Heart left ventricle (tissue), 16 donors: ENCODE measurements at regions of chr11 and their contacts with region 1.

Region 1: DNA sequence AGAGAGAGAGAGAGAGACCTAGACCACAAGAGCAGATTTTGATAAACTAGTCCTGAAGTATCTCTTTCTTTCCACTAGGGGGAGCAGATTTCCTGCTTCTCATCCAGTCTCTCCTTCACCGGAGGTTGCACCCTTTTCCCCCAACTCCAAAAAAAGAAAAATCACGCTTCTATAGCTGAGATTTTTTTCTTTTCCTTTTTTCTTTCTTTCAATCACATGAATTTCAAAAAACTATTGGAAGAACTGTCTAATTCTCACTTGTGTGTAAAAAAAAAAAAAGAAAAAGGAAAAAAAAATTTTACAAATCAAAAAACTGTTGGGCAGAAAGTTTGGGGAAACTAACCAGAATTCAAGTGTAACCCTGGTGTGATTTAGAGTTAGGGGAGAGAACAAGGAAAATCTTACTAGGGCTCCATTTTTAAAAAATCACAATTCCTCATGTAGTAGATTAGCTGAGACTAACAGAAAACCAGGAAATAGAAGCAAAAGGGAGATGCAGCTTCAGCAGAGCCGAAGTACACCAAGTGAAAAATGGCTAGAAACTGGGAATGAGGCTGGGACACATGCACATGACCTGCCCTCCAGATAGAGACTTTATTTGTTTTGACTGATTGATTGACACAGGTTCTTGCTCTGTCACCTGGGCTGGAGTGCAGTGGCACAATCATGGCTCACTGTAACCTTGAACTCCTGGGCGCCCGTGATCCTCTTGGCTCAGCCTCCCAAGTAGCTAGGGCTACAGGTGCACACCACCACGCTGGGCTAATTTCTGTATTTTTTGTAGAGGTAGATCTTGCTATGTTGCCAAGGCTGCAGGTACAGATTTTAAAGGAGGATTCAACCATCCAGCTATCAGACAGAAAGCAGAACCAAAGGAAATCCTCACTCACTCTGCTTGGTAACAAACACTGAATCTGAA is 27.1 kb downstream of the SDHD start:
- DNase-seq: no peak
- ATAC-seq: peak; percentile 57 to 82 (median 62)
- H3K4me3 ChIP-seq: peak overlapping the region in 3 of 12 donors; percentile 4 to 28 (median 18)
- H3K27ac ChIP-seq: no peak overlapping the region
- H3K4me1 ChIP-seq: peaks cover 0 to 5% (median 0%) of the 10 kb centered on the region in 12 donors
- H3K27me3 ChIP-seq: no peaks in the 10 kb centered on the region
- CTCF ChIP-seq: peak; percentile 50 to 78 (median 64)
- POLR2A ChIP-seq: no peak

Region 2: DNA sequence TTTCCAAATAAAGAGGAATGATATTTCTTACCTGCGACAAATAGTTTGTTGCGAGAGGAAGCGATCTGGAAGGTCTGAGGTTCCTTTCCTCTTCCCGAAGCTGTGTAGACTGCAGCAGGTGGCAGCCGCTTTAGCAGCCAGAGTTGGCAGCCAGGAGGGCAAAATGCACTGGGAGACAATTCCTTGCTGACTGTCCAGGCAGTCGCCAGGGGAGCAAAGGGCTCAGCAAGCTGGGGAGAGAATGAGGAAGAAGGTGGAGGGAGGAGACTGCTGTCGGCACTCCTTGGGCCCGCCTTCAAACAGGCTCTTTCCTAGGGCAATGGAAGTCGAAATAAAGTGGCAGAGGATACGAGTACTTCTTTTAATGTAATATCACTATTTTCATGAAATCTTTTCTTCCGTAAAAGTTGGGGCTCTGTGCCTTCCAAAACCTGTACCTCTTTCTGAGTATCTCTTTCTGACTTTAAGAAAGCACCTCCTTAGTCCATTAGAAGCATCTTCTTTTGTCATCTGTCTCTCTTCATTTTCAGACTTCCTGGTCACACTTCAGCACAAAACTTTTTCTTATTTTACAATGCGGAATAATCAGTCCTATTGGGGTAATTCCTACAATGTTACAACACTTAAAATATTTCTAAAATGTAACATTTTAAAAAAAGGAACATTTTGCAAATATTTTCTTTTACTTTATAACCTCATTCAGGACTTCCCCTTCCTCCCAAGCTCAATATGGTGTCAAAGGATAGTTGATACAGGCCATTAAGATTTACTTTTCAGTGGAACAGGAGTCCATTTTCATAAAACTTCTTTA is 50.3 kb after region 1 on chr11 and contains the start of gene IL18:
- intact Hi-C with region 1: loop called in 2 of 10 experiments (anchors 10 kb)
- DNase-seq: peak in 2 of 5 donors; percentile 45 to 64
- ATAC-seq: peak; percentile 44 to 64 (median 50)
- H3K4me3 ChIP-seq: peak within 1 kb of the TSS in 8 of 12 donors; percentile 13 to 58 (median 23)
- H3K27ac ChIP-seq: peak within 1 kb of the TSS in 2 of 12 donors; percentile 9 to 84
- H3K4me1 ChIP-seq: peaks cover 0 to 22% (median 0%) of the 10 kb centered on the region in 12 donors
- H3K27me3 ChIP-seq: no peaks in the 10 kb centered on the region
- CTCF ChIP-seq: no peak
- POLR2A ChIP-seq: no peak
- total RNA-seq, gene IL18: 0.88 to 23.9 (median 2.0) TPM

Region 3: DNA sequence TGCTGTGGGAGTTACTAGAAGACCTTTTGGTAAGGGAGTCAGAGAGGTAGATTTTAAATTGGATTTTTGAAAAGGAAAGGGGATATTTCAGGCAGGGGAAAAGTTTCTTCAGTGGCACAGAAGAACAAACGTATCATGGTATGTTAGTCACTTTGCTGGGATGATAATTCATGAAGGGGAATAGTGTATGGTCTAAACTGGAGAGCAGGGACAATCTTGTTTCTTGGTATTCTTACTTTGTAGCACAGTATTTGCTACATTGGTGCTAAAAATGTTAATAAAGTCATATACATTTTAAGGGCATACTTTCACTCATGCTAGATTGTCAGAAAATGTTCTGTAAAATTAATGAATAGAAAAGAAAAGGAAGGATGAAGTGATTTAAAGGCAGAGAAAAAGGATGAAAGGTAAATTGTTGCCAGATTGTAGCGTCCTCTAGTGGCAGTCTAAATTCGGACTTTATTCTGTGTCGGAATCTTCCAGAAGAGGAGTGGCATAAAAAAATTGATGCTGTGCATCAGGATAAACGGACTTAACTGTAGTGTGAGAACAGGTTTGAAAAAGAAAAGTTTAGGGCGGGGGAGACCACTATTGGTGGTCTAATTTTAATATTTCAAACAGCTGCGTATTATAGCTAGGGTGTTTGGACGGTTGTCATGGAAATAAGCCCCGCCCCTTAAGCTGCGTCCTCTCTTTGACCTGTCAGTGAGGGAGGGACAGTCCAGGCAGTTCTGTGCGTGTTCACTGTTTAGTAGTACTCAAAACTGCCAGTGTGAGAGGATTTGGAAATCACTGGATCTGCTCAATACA is 61.2 kb after region 1 on chr11 and contains the start of gene BCO2:
- intact Hi-C with region 1: loop called in 7 of 10 experiments (anchors 2 to 10 kb)
- DNase-seq: peak; percentile 78 to 90 (median 86)
- ATAC-seq: peak; percentile 91 to 95 (median 94)
- H3K4me3 ChIP-seq: peak within 1 kb of the TSS; percentile 21 to 62 (median 48)
- H3K27ac ChIP-seq: peak within 1 kb of the TSS; percentile 28 to 87 (median 78)
- H3K4me1 ChIP-seq: peaks cover 0 to 25% (median 7%) of the 10 kb centered on the region in 12 donors
- H3K27me3 ChIP-seq: no peaks in the 10 kb centered on the region
- CTCF ChIP-seq: peak; percentile 60 to 85 (median 78)
- POLR2A ChIP-seq: peak in 1 of 2 donors; percentile 50
- total RNA-seq, gene BCO2: 51.8 to 126 (median 86.1) TPM

Region 4: DNA sequence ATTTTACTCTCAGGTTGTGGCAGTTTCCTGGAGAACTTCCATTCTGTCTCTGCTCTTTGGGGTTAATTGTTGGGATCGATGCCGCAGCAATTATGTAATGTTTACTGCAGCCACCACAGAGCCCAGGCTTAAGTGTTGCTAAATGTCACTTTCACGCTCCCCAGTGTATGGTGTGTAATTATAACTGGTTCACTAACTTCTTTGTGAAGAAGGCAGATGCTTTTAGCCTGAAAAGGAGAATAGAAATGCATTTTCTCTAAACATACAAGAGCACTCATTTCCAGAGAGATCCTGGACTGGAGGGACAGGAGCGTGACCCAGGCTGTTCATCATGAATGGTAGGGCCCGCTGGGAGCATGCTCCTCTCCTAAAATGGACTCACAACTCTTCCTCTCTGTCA is 279.1 kb after region 1 on chr11:
- intact Hi-C with region 1: no loop called
- DNase-seq: no peak
- ATAC-seq: no peak
- H3K4me3 ChIP-seq: no peak overlapping the region
- H3K27ac ChIP-seq: no peak overlapping the region
- H3K4me1 ChIP-seq: no peaks in the 10 kb centered on the region
- H3K27me3 ChIP-seq: no peaks in the 10 kb centered on the region
- CTCF ChIP-seq: no peak
- POLR2A ChIP-seq: no peak